B cell (primary cell): ENCODE measurements at regions of chr15 and their contacts with region 1.

Region 1: GRCh38 chr15:60585743-60586708 is 107.1 kb upstream of the ICE2 start:
- DNase-seq: peak; percentile 79
- ATAC-seq: peak; percentile 75
- H3K4me3 ChIP-seq: no peak overlapping the region
- H3K4me3 Mint-ChIP-seq: no peak overlapping the region
- H3K27ac ChIP-seq: no peak overlapping the region
- H3K27ac Mint-ChIP-seq: no peak overlapping the region
- H3K4me1 ChIP-seq: peaks cover 4 to 18% of the 10 kb centered on the region in 2 donors
- H3K4me1 Mint-ChIP-seq: peaks cover 18% of the 10 kb centered on the region
- H3K27me3 ChIP-seq: peaks cover 2 to 26% (median 17%) of the 10 kb centered on the region in 4 experiments
- H3K27me3 Mint-ChIP-seq: peaks cover 22% of the 10 kb centered on the region
- CTCF ChIP-seq: peak; percentile 97

Region 2: DNA sequence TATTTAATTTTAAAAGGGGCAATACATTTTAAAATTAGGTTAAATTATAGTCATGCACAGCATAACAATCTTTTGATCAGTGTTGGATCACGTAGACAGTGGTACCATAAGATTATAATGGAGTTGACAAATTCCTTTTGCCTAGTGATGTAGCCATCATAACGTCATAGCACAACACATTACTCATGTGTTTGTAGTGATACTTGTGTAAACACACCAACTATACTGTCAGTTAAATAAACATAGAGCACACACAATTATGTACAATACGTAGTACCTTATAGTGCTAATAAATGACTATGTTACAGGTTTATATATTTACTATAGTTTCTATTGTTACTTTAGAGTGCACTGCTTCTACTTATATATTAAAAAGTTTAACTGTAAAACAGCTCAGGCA is 550.7 kb before region 1 on chr15:
- CTCF ChIA-PET with region 1: no interaction called
- POLR2A ChIA-PET with region 1: no interaction called
- intact Hi-C with region 1: no loop called
- DNase-seq: no peak
- ATAC-seq: no peak
- H3K4me3 ChIP-seq: no peak overlapping the region
- H3K4me3 Mint-ChIP-seq: no peak overlapping the region
- H3K27ac ChIP-seq: no peak overlapping the region
- H3K27ac Mint-ChIP-seq: no peak overlapping the region
- H3K4me1 ChIP-seq: no peaks in the 10 kb centered on the region
- H3K4me1 Mint-ChIP-seq: no peaks in the 10 kb centered on the region
- H3K27me3 ChIP-seq: no peaks in the 10 kb centered on the region
- H3K27me3 Mint-ChIP-seq: peaks cover 22% of the 10 kb centered on the region
- CTCF ChIP-seq: no peak

Region 3: GRCh38 chr15:60568301-60568742 is 17.7 kb before region 1 on chr15:
- CTCF ChIA-PET with region 1: interaction called, 57 read pairs
- POLR2A ChIA-PET with region 1: no interaction called
- intact Hi-C with region 1: no loop called
- DNase-seq: peak; percentile 51
- ATAC-seq: peak; percentile 84
- H3K4me3 ChIP-seq: peak overlapping the region in 1 of 5 experiments; percentile 10
- H3K4me3 Mint-ChIP-seq: peak overlapping the region; percentile 76
- H3K27ac ChIP-seq: peak overlapping the region in 1 of 2 donors; percentile 42
- H3K27ac Mint-ChIP-seq: peak overlapping the region; percentile 73
- H3K4me1 ChIP-seq: peaks cover 12 to 32% of the 10 kb centered on the region in 2 donors
- H3K4me1 Mint-ChIP-seq: peaks cover 25% of the 10 kb centered on the region
- H3K27me3 ChIP-seq: no peaks in the 10 kb centered on the region
- H3K27me3 Mint-ChIP-seq: no peaks in the 10 kb centered on the region
- CTCF ChIP-seq: no peak

Region 4: GRCh38 chr15:61834076-61834697 is 1248.2 kb after region 1 on chr15:
- CTCF ChIA-PET with region 1: interaction called, 71 read pairs
- POLR2A ChIA-PET with region 1: no interaction called
- intact Hi-C with region 1: no loop called
- DNase-seq: peak; percentile 72
- ATAC-seq: peak; percentile 83
- H3K4me3 ChIP-seq: no peak overlapping the region
- H3K4me3 Mint-ChIP-seq: no peak overlapping the region
- H3K27ac ChIP-seq: no peak overlapping the region
- H3K27ac Mint-ChIP-seq: no peak overlapping the region
- H3K4me1 ChIP-seq: peaks cover 0 to 7% of the 10 kb centered on the region in 2 donors
- H3K4me1 Mint-ChIP-seq: peaks cover 4% of the 10 kb centered on the region
- H3K27me3 ChIP-seq: peaks cover 0 to 24% (median 4%) of the 10 kb centered on the region in 4 experiments
- H3K27me3 Mint-ChIP-seq: peaks cover 45% of the 10 kb centered on the region
- CTCF ChIP-seq: peak; percentile 95